ENCODE measurements at regions of chr2 and their contacts with region 1.

Region 1: GRCh38 chr2:47389692-47390091 is 13.3 kb upstream of the MSH2 start:
- DNase-seq: no peak
- ATAC-seq: no peak
- H3K4me3 ChIP-seq: no peak overlapping the region
- H3K27ac ChIP-seq: no peak overlapping the region
- H3K4me1 ChIP-seq: no peaks in the 10 kb centered on the region
- H3K27me3 ChIP-seq: no peaks in the 10 kb centered on the region
- CTCF ChIP-seq: no peak
- POLR2A ChIP-seq: no peak

Region 2: GRCh38 chr2:47225061-47225859 is 164.4 kb before region 1 on chr2:
- intact Hi-C with region 1: no loop called
- DNase-seq: peak; percentile 89 to 92 (median 91)
- ATAC-seq: peak; percentile 88 to 95 (median 92)
- H3K4me3 ChIP-seq: no peak overlapping the region
- H3K27ac ChIP-seq: peak overlapping the region in 2 of 3 donors; percentile 35 to 73
- H3K4me1 ChIP-seq: peaks cover 0 to 34% (median 15%) of the 10 kb centered on the region in 4 donors
- H3K27me3 ChIP-seq: no peaks in the 10 kb centered on the region
- CTCF ChIP-seq: no peak
- POLR2A ChIP-seq: no peak

Region 3: DNA sequence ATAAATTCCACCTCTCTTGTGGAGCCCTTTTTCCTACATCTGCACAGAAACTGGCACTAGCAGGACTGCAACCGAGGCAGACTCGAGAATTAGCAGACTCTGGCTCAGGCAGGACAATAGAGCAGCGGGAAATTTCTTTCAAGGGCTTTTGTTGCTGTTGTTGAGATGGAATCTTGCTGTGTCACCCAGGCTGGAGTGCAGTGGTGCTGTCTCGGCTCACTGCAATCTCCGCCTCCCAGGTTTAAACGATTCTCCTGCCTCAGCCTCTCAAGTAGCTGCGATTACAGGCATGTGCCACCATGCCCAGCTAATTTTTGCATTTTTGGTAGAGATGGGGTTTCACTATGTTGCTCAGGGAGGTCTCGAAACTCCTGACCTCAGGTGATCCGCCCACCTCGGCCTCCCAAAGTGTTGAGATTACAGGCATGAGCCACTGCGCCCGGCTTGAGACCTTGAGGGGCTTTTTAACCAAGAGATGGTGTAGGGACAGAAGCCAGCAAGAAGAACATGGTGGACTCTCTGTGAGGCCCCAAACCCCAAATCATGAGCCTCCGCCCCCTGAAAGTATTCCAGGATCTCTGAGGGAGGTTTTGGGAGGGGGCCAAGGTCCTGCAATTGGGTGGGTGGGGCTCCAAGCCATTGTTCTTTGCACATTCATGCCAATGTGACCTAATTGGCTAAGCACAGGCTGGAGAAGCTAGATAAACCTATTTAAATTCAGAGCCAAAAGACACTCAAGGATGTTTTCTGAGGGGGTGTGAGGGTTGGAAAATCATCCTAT is 55.1 kb before region 1 on chr2:
- intact Hi-C with region 1: loop called (anchors 5 kb)
- DNase-seq: no peak
- ATAC-seq: no peak
- H3K4me3 ChIP-seq: no peak overlapping the region
- H3K27ac ChIP-seq: no peak overlapping the region
- H3K4me1 ChIP-seq: peaks cover 0 to 2% (median 0%) of the 10 kb centered on the region in 4 donors
- H3K27me3 ChIP-seq: no peaks in the 10 kb centered on the region
- CTCF ChIP-seq: no peak
- POLR2A ChIP-seq: no peak

Region 4: GRCh38 chr2:47344890-47345589 is 44.7 kb before region 1 on chr2:
- intact Hi-C with region 1: loop called in 1 of 2 experiments (anchors 5 kb)
- DNase-seq: peak; percentile 81 to 91 (median 83)
- ATAC-seq: peak; percentile 97 to 99 (median 98)
- H3K4me3 ChIP-seq: peak overlapping the region in 2 of 3 donors; percentile 2 to 30
- H3K27ac ChIP-seq: peak overlapping the region in 2 of 3 donors; percentile 35 to 51
- H3K4me1 ChIP-seq: peaks cover 0 to 18% (median 1%) of the 10 kb centered on the region in 4 donors
- H3K27me3 ChIP-seq: no peaks in the 10 kb centered on the region
- CTCF ChIP-seq: peak in 3 of 4 donors; percentile 4 to 20 (median 15)
- POLR2A ChIP-seq: no peak